ENCODE measurements at regions of chr12 and their contacts with region 1.

Region 1: GRCh38 chr12:104720339-104721038 is 237.6 kb downstream of the SLC41A2 start:
- DNase-seq: peak; percentile 86
- ATAC-seq: peak; percentile 71
- H3K4me3 Mint-ChIP-seq: peak overlapping the region; percentile 75
- H3K27ac Mint-ChIP-seq: peak overlapping the region; percentile 94
- H3K4me1 Mint-ChIP-seq: peaks cover 48% of the 10 kb centered on the region
- H3K27me3 Mint-ChIP-seq: no peaks in the 10 kb centered on the region
- CTCF ChIP-seq: no peak

Region 2: GRCh38 chr12:104671407-104672098 is 48.9 kb before region 1 on chr12:
- CTCF ChIA-PET with region 1: no interaction called
- POLR2A ChIA-PET with region 1: no interaction called
- intact Hi-C with region 1: loop called (anchors 2 kb)
- DNase-seq: peak; percentile 98
- ATAC-seq: peak; percentile 80
- H3K4me3 Mint-ChIP-seq: peak overlapping the region; percentile 70
- H3K27ac Mint-ChIP-seq: peak overlapping the region; percentile 97
- H3K4me1 Mint-ChIP-seq: peaks cover 60% of the 10 kb centered on the region
- H3K27me3 Mint-ChIP-seq: no peaks in the 10 kb centered on the region
- CTCF ChIP-seq: no peak

Region 3: DNA sequence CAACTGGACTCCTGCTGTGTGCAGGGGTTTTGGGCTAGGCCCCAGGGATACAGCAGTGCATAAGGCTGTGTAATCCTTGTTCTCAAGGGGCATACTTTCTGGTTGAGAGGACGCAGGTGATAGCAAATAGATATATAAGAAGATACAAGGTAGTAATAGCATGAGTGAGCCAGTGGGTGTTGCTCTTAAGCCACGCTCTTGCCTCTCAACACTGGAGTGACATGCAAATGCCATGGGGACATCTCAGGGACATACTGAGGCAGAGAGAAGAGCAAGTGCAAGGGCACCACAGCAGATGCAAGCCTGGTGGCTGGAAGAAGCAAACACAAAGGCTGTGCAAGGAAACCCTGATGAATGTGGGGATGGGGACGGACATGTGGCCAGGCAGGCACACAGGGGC is 40.4 kb before region 1 on chr12:
- CTCF ChIA-PET with region 1: interaction called, 4 read pairs
- POLR2A ChIA-PET with region 1: no interaction called
- intact Hi-C with region 1: loop called (anchors 5 kb)
- DNase-seq: peak; percentile 69
- ATAC-seq: peak; percentile 57
- H3K4me3 Mint-ChIP-seq: no peak overlapping the region
- H3K27ac Mint-ChIP-seq: peak overlapping the region; percentile 74
- H3K4me1 Mint-ChIP-seq: peaks cover 56% of the 10 kb centered on the region
- H3K27me3 Mint-ChIP-seq: no peaks in the 10 kb centered on the region
- CTCF ChIP-seq: peak; percentile 59

Region 4: DNA sequence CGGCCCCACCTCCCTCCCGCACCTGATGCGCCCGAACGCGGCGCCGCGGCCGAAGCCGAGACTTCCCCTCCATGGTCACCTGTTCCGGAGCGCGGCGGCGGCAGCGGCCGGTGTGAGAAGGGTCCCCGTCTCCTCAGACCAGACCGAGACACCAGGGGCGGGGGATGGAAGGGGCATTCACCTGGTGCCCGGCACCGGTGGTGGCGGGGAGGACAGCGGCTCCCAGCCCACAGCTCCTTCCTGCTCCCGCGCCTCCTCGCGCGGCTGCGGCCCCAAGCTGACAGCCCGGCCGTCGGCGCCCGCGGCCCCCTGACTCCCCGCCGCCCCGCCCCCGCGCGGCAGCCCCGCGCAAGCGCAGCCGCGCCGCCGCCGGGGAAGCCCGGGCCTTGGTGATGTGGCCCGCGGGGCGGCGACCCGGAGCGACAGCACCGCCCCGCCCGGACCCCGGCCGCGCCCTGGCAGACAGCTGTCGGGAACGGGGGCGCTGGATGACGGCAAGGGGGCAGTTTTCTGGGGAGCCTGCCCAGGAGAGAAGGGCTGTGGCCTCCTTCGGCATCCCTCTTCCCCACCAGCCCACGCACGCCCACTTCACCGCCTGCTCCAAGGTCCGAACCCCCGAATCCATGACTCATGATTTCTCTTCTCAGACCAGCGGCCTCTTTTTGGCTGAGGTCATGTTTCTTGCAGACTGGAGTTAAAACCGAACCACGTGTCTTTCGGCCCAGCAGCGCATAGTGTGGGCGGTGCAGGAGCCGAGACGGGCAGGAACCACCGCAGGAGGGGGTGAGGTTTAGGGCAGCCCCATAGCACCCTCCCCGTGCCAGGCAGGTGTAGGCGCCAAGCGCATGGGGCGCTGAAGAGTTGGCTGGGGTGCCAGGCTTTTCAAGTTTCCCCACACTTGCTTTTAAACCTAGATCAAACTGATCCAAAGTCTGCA is 237.8 kb after region 1 on chr12 and contains the start of gene SLC41A2:
- CTCF ChIA-PET with region 1: no interaction called
- POLR2A ChIA-PET with region 1: no interaction called
- intact Hi-C with region 1: no loop called
- DNase-seq: peak; percentile 92
- ATAC-seq: peak; percentile 88
- H3K4me3 Mint-ChIP-seq: peak within 1 kb of the TSS; percentile 78
- H3K27ac Mint-ChIP-seq: peak within 1 kb of the TSS; percentile 84
- H3K4me1 Mint-ChIP-seq: peaks cover 24% of the 10 kb centered on the region
- H3K27me3 Mint-ChIP-seq: peaks cover 13% of the 10 kb centered on the region
- CTCF ChIP-seq: no peak
- total RNA-seq, gene SLC41A2: 5.3 to 11.1 TPM

Measured in activated CD8-positive, alpha-beta T cell treated with anti-CD3 and anti-CD28 coated beads for 36 hours (primary cell).